GM13977 (cell line): ENCODE measurements at regions of chr14 and their contacts with region 1.

Region 1: DNA sequence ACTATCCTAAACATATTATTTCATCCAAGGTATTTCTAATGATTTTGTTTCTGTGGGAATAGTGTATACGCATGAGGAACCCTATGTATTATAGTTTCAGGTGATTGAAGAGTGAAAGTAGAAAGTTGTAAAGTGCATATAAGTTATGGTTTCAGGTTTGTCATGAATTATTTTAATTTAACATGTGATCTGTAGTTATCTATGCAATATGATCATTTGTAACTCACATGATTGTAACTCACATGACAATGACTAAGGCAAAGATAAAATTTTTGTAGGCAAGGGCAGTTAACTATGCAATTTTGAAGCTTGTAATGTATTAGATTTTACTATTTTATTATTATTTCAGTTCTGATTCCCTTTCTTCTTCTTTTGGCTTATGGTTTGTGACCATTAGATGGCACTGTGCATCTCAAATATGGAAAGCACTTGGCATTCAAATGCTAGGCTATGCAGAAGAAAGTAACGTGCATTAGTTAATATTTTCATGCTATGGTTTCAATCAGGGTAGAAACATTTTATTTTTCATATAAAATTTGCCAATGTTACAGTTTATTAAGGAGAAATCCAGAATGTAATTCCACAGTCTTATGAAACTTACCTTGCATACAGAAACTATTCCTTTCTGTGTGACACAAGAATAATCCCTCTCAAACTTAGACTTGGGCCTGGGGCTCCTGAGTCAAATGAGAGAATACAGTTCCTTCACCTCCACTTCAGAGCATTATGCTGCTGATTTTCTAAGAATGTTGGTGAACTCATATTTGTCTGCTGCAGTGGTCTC is 15.8 kb upstream of the TMEM30B start:
- DNase-seq: no peak
- CTCF ChIP-seq: peak; percentile 63

Region 2: GRCh38 chr14:61527325-61528100 is 230.6 kb after region 1 on chr14:
- in situ Hi-C with region 1: no loop called
- DNase-seq: no peak
- CTCF ChIP-seq: no peak

Region 3: GRCh38 chr14:61837336-61838229 is 540.7 kb after region 1 on chr14:
- in situ Hi-C with region 1: loop called (anchors 25 kb)
- DNase-seq: peak; percentile 56
- CTCF ChIP-seq: peak; percentile 90